ENCODE measurements at regions of chr20 and their contacts with region 1.

Region 1: GRCh38 chr20:10647465-10647864 is 26.3 kb downstream of the JAG1 start:
- DNase-seq: peak in 1 of 5 donors; percentile 1
- H3K4me3 ChIP-seq: no peak overlapping the region
- H3K27ac ChIP-seq: no peak overlapping the region
- H3K4me1 ChIP-seq: no peaks in the 10 kb centered on the region
- H3K27me3 ChIP-seq: no peaks in the 10 kb centered on the region
- CTCF ChIP-seq: no peak
- EP300 ChIP-seq: no peak
- POLR2A ChIP-seq: no peak

Region 2: DNA sequence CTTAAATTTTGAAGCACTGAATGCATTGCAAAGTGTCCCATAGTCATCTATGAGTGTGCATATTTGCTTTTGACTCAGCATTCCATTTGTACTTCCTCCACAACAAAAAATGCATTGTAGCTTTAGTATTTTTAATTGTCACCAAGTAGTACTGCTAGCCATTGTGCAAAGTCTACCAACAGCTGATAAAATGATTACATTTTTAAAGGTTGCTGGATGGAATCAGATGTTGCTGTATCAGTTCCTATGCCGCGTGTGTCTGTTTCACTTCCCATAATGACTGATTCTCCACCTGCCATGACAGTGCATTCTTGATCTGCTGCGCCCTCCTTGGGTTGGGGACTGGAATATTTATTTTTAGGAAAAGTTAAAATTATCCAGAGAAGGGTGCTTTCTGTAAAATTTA is 171.1 kb before region 1 on chr20:
- intact Hi-C with region 1: loop called in 1 of 4 experiments (anchors 10 kb)
- DNase-seq: no peak
- H3K4me3 ChIP-seq: no peak overlapping the region
- H3K27ac ChIP-seq: no peak overlapping the region
- H3K4me1 ChIP-seq: peaks cover 3% of the 10 kb centered on the region
- H3K27me3 ChIP-seq: no peaks in the 10 kb centered on the region
- CTCF ChIP-seq: no peak
- EP300 ChIP-seq: no peak
- POLR2A ChIP-seq: no peak

Region 3: GRCh38 chr20:10536531-10536930 is 110.9 kb before region 1 on chr20:
- intact Hi-C with region 1: no loop called
- DNase-seq: no peak
- H3K4me3 ChIP-seq: no peak overlapping the region
- H3K27ac ChIP-seq: no peak overlapping the region
- H3K4me1 ChIP-seq: peaks cover 3% of the 10 kb centered on the region
- H3K27me3 ChIP-seq: no peaks in the 10 kb centered on the region
- CTCF ChIP-seq: no peak
- EP300 ChIP-seq: no peak
- POLR2A ChIP-seq: no peak

Region 4: GRCh38 chr20:10739566-10739965 is 92.1 kb after region 1 on chr20:
- intact Hi-C with region 1: no loop called
- DNase-seq: no peak
- H3K4me3 ChIP-seq: peak overlapping the region; percentile 15
- H3K27ac ChIP-seq: no peak overlapping the region
- H3K4me1 ChIP-seq: peaks cover 11% of the 10 kb centered on the region
- H3K27me3 ChIP-seq: no peaks in the 10 kb centered on the region
- CTCF ChIP-seq: no peak
- EP300 ChIP-seq: no peak
- POLR2A ChIP-seq: no peak

Region 5: GRCh38 chr20:10927936-10928840 is 280.7 kb after region 1 on chr20:
- intact Hi-C with region 1: no loop called
- DNase-seq: no peak
- H3K4me3 ChIP-seq: no peak overlapping the region
- H3K27ac ChIP-seq: no peak overlapping the region
- H3K4me1 ChIP-seq: peaks cover 5% of the 10 kb centered on the region
- H3K27me3 ChIP-seq: no peaks in the 10 kb centered on the region
- CTCF ChIP-seq: no peak
- EP300 ChIP-seq: no peak
- POLR2A ChIP-seq: no peak

Region 6: GRCh38 chr20:10985536-10985935 is 338.1 kb after region 1 on chr20:
- intact Hi-C with region 1: no loop called
- DNase-seq: no peak
- H3K4me3 ChIP-seq: no peak overlapping the region
- H3K27ac ChIP-seq: no peak overlapping the region
- H3K4me1 ChIP-seq: peaks cover 1% of the 10 kb centered on the region
- H3K27me3 ChIP-seq: no peaks in the 10 kb centered on the region
- CTCF ChIP-seq: no peak
- EP300 ChIP-seq: no peak
- POLR2A ChIP-seq: no peak

Measured in ovary (tissue), 10 donors.